AG04450 (cell line): ENCODE measurements at regions of chr1 and their contacts with region 1.

Region 1: DNA sequence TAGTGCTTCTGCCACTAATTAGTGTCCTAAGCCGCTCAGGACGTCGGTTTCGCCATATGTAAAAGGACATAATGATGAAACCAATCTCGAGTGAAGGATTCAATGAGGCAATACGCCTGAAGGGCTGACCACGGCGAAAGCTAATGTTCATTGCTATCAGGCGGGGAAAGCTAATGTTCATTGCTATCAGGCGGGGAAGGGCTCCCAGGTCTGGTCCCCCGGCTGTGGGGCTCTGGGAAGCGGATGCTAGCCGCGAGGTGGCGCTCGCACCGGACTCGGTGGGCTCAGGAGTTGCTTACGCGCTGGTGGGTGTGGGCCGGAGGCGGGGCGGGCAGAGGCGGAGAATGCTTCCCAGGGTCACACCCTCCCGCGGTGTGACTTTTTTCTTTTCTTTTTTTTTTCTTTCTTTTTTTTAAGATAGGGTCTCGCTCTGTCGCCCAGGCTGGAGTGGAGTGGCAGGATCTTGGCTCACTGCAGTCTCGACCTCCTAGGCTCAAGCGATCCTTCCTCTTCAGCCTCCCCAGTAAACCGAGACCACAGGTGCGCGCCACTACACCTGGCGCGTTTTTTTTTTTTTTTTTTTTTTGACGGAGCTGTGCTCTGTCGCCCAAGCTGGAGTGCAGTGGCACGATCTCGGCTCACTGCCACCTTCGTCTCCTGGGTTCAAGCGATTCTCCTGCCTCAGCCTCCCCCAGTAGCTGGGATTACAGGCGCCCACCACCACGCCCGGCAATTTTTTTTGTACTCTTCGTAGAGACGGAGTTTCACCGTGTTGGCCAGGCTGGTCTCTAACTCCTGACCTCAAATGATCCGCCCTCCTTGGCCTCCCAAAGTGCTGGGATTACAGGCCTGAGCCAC is 1.1 kb upstream of the PEAR1 start:
- DNase-seq: peak; percentile 68
- H3K4me3 ChIP-seq: peak overlapping the region; percentile 41
- H3K27ac ChIP-seq: peak overlapping the region; percentile 61
- H3K27me3 ChIP-seq: peaks cover 6% of the 10 kb centered on the region
- CTCF ChIP-seq: peak; percentile 82

Region 2: DNA sequence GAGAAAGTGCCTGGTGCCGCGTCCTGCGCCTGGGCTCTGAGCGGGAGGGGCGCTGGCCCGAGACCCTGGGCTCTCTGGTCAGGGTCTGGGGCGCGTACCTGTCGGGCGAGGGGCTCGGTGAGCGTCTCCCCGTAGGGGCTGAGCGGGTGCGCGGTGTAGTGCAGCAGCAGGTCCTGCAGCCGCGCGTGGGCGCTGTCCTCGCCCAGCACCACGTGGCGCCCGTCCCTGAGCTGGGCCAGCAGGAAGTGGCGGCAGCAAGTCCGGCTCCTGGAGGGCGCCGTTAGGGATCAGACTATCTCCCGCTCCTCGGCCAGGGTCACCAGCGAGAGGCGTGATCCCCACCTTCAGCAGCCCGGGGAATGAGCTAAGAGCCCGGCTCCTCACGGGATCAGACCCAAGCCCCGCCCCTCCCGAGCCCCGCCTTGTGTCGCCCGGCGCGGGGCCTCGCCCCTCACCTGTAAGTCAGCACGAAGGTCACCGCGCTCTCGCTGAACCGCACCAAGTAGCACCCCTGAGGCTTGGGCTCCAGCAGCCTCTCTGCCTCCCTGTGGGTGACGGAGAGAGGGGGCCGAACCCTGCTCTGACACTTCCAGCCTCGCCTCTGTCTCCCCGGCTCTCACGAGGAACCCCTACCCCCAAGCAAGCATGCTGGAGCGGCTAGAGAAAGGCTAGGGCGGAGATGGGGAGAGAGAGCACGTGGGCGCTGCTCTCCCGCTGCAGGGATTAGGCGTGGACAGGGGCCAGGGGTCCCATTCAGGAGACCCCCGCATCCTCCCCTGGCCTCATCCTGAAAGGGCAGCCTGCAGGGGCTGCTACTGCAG is 78.5 kb before region 1 on chr1:
- CTCF ChIA-PET with region 1: interaction called, 17 read pairs
- POLR2A ChIA-PET with region 1: no interaction called
- DNase-seq: no peak
- H3K4me3 ChIP-seq: peak overlapping the region; percentile 27
- H3K27ac ChIP-seq: no peak overlapping the region
- H3K27me3 ChIP-seq: peaks cover 11% of the 10 kb centered on the region
- CTCF ChIP-seq: peak; percentile 49

Region 3: GRCh38 chr1:156838981-156839410 is 53.4 kb before region 1 on chr1:
- CTCF ChIA-PET with region 1: interaction called, 74 read pairs
- POLR2A ChIA-PET with region 1: interaction called, 5 read pairs
- DNase-seq: no peak
- H3K4me3 ChIP-seq: no peak overlapping the region
- H3K27ac ChIP-seq: no peak overlapping the region
- H3K27me3 ChIP-seq: peaks cover 76% of the 10 kb centered on the region
- CTCF ChIP-seq: peak; percentile 92

Region 4: GRCh38 chr1:156876281-156876680 is 16.1 kb before region 1 on chr1:
- CTCF ChIA-PET with region 1: interaction called, 32 read pairs
- POLR2A ChIA-PET with region 1: no interaction called
- DNase-seq: no peak
- H3K4me3 ChIP-seq: no peak overlapping the region
- H3K27ac ChIP-seq: no peak overlapping the region
- H3K27me3 ChIP-seq: peaks cover 59% of the 10 kb centered on the region
- CTCF ChIP-seq: peak; percentile 44

Region 5: GRCh38 chr1:156927215-156928042 is 35.0 kb after region 1 on chr1:
- CTCF ChIA-PET with region 1: interaction called, 66 read pairs
- POLR2A ChIA-PET with region 1: interaction called, 4 read pairs
- DNase-seq: peak; percentile 26
- H3K4me3 ChIP-seq: peak overlapping the region; percentile 50
- H3K27ac ChIP-seq: no peak overlapping the region
- H3K27me3 ChIP-seq: peaks cover 47% of the 10 kb centered on the region
- CTCF ChIP-seq: peak; percentile 81